Activated naive CD8-positive, alpha-beta T cell treated with anti-CD3 and anti-CD28 coated beads, Interleukin-2, amount 10 ng/mL, durations not matched to agents 7 days and 5 days (primary cell): ENCODE measurements at regions of chr3 and their contacts with region 1.

Region 1: DNA sequence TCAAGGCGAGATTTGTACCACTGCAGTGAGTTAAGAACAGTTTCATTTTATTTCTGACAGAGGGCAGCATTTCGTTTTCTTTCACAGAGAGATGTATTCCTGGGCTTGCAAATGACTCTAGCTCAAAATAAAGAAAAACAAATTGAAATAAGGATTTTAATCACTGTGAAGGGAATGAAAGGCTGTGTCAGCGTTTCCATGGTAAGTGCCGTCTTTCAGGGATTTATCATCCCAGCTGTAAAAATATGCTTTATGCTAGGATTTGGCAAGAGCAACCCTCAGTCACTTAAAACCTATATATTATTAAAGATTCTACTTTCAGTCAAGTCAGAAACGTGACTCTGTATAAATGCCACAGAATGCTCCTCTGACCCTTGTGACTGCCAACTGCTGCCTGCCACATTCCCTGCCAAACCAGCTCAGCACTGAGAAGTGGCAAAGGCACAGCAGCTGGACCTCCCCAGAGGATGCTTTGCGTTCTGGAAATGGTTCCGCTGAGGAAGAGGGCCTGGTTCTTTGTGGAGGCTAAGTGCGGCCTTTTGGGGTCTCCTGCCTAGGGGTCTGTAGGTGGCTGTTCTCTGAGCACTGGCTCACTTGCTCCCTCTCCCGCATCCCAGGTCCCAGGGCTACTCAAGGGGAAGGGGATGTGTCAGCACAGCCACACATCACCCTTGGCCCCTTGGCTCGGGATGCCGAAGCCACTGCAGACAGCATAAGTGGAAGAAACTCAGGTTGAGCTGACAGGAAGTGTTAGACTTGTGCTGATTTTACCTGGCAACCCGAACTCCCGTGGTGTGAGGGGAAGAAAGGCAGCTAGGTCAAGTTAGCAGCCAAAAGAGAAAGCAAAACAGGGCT is 56.6 kb upstream of the POMGNT2 start:
- DNase-seq: peak; percentile 70
- ATAC-seq: peak; percentile 91
- H3K4me3 Mint-ChIP-seq: peak overlapping the region; percentile 84
- H3K27ac Mint-ChIP-seq: peak overlapping the region; percentile 99
- H3K4me1 Mint-ChIP-seq: peaks cover 24% of the 10 kb centered on the region
- H3K27me3 Mint-ChIP-seq: no peaks in the 10 kb centered on the region

Region 2: GRCh38 chr3:43062564-43063040 is 99.9 kb before region 1 on chr3:
- POLR2A ChIA-PET with region 1: no interaction called
- DNase-seq: no peak
- ATAC-seq: no peak
- H3K4me3 Mint-ChIP-seq: no peak overlapping the region
- H3K27ac Mint-ChIP-seq: no peak overlapping the region
- H3K4me1 Mint-ChIP-seq: peaks cover 11% of the 10 kb centered on the region
- H3K27me3 Mint-ChIP-seq: peaks cover 6% of the 10 kb centered on the region

Region 3: GRCh38 chr3:43105596-43106292 is 56.7 kb before region 1 on chr3 and contains the start of gene POMGNT2:
- POLR2A ChIA-PET with region 1: no interaction called
- DNase-seq: peak; percentile 93
- ATAC-seq: peak; percentile 99
- H3K4me3 Mint-ChIP-seq: peak within 1 kb of the TSS; percentile 84
- H3K27ac Mint-ChIP-seq: peak within 1 kb of the TSS; percentile 21
- H3K4me1 Mint-ChIP-seq: peaks cover 11% of the 10 kb centered on the region
- H3K27me3 Mint-ChIP-seq: peaks cover 3% of the 10 kb centered on the region
- total RNA-seq, gene POMGNT2: 7.6 to 8.8 TPM

Region 4: GRCh38 chr3:43180027-43180426 is 17.6 kb after region 1 on chr3:
- POLR2A ChIA-PET with region 1: interaction called, 20 read pairs
- DNase-seq: no peak
- ATAC-seq: peak; percentile 90
- H3K4me3 Mint-ChIP-seq: peak overlapping the region; percentile 84
- H3K27ac Mint-ChIP-seq: peak overlapping the region; percentile 98
- H3K4me1 Mint-ChIP-seq: peaks cover 38% of the 10 kb centered on the region
- H3K27me3 Mint-ChIP-seq: peaks cover 1% of the 10 kb centered on the region

Region 5: GRCh38 chr3:43194490-43195114 is 32.1 kb after region 1 on chr3:
- POLR2A ChIA-PET with region 1: interaction called, 12 read pairs
- DNase-seq: peak; percentile 45
- ATAC-seq: peak; percentile 97
- H3K4me3 Mint-ChIP-seq: peak overlapping the region; percentile 63
- H3K27ac Mint-ChIP-seq: peak overlapping the region; percentile 95
- H3K4me1 Mint-ChIP-seq: peaks cover 42% of the 10 kb centered on the region
- H3K27me3 Mint-ChIP-seq: peaks cover 3% of the 10 kb centered on the region

Region 6: DNA sequence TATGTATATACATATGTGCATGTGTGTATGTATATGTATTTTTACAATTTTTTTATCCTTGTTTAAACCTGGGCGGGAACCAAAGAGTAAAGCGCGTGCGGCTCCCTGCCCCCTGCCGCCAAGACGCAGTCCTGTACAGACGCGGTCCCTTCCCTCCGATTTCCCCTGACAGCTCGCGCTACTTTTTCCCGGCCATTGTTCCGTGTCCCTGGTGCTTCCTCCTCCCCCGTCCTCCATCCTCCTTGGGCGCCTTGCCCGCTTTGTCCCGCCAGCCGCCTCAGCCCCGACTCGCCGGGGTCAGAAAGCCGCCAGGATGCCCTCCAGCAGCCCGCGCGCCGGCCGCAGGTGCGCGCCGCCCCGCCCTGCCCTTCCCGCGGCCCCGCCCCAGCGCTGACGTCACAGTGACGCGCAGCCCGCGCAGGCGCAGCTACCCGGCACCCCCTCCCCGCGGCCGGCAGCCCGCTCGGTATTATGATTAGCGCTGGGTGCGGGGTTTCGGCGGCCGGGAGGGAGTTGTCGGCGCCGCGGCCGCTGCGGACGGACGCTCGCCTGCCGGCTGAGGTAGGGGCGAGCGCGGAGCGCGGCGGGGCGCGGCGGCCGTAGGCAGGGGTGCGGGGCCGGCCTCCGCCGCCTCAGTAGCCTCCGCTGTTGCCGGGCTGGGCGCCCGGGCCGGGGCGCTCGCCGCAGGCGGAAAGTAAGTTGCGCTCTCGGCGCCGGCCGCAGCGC is 123.8 kb after region 1 on chr3 and contains the start of gene SNRK:
- POLR2A ChIA-PET with region 1: interaction called, 25 read pairs
- DNase-seq: peak; percentile 99
- ATAC-seq: peak; percentile 82
- H3K4me3 Mint-ChIP-seq: peak within 1 kb of the TSS; percentile 95
- H3K27ac Mint-ChIP-seq: peak within 1 kb of the TSS; percentile 95
- H3K4me1 Mint-ChIP-seq: peaks cover 26% of the 10 kb centered on the region
- H3K27me3 Mint-ChIP-seq: no peaks in the 10 kb centered on the region
- total RNA-seq, gene SNRK: 70.7 to 73.6 TPM

Region 7: GRCh38 chr3:43345877-43346276 is 183.4 kb after region 1 on chr3:
- POLR2A ChIA-PET with region 1: interaction called, 15 read pairs
- DNase-seq: no peak
- ATAC-seq: peak; percentile 51
- H3K4me3 Mint-ChIP-seq: peak overlapping the region; percentile 74
- H3K27ac Mint-ChIP-seq: peak overlapping the region; percentile 89
- H3K4me1 Mint-ChIP-seq: peaks cover 64% of the 10 kb centered on the region
- H3K27me3 Mint-ChIP-seq: no peaks in the 10 kb centered on the region